Posterior vena cava (tissue), 2 donors: ENCODE measurements at regions of chr17 and their contacts with region 1.

Region 1: DNA sequence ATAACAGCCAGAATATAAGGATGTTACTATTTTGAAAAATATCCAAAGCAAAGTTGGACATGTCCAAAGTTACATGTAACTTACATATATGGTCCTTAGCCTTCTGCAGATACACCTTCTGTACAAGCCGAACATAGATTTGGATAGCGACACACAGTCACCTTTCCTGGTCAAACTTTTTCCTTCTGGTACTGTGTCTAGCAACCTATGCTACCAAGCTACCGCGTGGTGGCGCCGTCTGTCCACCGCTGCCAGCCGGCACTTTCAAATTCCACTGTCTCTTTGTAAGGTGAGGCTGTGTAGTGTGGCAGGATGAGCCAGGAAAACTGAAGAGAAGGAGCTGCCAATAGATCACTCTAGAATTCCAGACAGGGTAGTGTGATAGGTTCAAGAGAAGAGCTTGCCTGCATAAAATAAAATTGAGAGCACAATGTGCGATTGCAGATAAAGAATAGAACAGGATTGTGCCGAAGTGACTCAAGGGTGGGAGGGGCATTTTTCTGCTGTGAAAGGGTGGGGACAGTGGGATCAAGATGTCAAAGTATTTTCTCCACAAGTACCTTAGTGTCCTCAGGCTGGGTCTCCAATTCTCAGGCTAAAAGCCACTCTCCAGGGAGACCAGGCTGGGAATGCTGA is 366.9 kb downstream of the SLC39A11 start:
- DNase-seq: peak; percentile 83

Region 2: GRCh38 chr17:73247726-73248125 is 522.2 kb after region 1 on chr17:
- intact Hi-C with region 1: loop called in 1 of 2 experiments (anchors 10 kb)
- DNase-seq: no peak

Region 3: DNA sequence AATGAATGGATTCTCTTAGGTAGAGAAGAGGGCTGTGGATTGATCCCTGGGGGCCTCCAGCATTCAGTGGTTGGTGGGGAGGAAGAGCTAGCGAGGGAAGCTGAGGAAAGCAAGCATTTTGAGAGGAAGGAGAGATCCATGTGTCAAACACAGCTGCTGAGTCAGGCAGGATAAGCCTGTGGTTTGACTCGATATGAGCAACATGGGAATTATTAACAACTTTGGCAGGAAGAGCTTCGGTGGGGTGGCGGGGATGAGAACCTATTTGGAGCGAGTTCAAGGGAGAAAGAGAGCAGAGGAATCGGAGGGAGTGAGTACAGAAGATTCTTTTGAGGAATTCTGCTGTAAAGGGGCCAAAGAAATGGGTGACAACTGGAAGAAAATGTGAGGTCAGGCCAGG is 645.7 kb after region 1 on chr17:
- intact Hi-C with region 1: loop called in 1 of 2 experiments (anchors 10 kb)
- DNase-seq: no peak